Activated CD4-positive, alpha-beta memory T cell treated with anti-CD3 and anti-CD28 coated beads, Interleukin-2, amount 10 ng/mL, durations not matched to agents 7 days and 5 days (primary cell): ENCODE measurements at regions of chr17 and their contacts with region 1.

Region 1: GRCh38 chr17:64420143-64420971 is 28.6 kb upstream of the MILR1 start:
- DNase-seq: peak; percentile 34
- H3K4me3 Mint-ChIP-seq: no peak overlapping the region
- H3K27ac Mint-ChIP-seq: no peak overlapping the region
- H3K4me1 Mint-ChIP-seq: peaks cover 5% of the 10 kb centered on the region
- H3K27me3 Mint-ChIP-seq: peaks cover 5% of the 10 kb centered on the region

Region 2: DNA sequence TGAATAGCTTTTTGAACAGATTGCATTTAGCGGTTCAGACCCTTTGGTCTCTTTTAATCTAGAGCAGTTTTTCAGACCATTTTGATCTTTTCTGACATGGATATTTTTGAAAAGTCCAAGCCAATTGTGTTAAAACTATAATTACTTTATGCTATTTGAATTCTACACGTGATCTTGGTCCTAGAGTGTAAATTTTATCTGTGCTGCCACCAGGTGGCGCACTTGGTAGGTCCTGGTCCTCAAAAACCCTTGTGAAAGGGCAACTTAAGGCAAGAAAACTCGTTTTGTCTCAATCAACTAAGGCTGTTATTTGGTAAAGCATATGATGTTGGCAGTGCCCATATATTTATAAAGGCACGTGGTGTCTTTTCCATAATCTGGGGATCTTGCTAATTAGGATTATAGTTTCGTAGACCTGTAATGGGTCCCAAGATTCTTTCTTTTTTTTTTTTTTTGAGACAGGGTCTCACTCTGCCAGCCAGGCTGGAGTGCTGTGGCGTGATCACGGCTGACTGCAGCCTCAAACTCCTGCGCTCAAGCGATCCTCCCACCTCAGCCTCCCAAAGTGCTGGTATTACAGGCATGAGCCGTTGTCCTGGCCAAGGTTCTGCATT is 113.4 kb before region 1 on chr17:
- CTCF ChIA-PET with region 1: interaction called, 26 read pairs
- POLR2A ChIA-PET with region 1: interaction called, 3 read pairs
- DNase-seq: peak; percentile 71
- H3K4me3 Mint-ChIP-seq: no peak overlapping the region
- H3K27ac Mint-ChIP-seq: no peak overlapping the region
- H3K4me1 Mint-ChIP-seq: no peaks in the 10 kb centered on the region
- H3K27me3 Mint-ChIP-seq: peaks cover 2% of the 10 kb centered on the region

Region 3: DNA sequence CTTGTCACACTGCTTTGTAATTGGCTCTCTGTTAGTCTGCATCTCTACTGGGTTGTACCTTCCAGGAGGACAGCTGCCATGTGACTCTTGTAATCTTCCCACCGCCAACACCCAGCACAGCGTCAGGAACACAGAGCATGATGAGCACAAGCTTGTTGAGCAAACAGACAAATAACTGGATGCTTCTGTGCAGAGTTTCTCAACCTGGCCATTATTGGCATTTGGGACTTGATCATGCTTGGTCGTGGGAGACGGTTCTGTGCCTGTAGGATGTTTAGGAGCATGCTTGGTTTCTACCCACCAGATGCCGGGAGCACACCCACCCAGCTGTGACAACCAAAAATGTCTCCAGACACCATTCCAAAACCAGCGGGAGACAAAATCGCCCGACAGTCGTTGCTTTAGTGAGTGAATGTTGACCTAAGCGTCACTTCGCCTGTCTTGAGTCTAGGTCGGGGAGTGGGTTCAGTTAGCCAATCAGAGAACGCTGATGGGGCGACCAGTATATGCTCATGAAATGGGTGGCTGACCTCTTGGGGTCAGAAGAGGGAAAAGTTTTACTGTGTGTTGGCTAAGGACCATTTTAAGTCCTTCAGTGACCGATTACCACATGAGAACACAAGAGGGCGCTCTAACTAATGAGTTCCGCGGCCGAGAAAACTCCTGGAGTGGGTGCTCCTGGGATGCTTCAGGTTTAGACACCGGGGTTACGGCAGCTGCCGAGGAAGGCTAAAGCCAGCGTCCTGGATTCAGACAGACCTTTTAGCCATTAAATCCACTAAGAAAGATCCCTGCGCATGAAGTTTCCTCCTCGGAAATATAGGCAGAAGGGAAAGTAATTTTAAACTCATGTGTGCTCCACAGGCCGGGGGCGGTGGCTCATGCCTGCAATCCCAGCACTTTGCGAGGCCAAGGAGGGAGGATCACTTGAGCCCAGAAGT is 99.5 kb before region 1 on chr17:
- CTCF ChIA-PET with region 1: interaction called, 99 read pairs
- POLR2A ChIA-PET with region 1: no interaction called
- DNase-seq: peak; percentile 58
- H3K4me3 Mint-ChIP-seq: peak overlapping the region; percentile 33
- H3K27ac Mint-ChIP-seq: no peak overlapping the region
- H3K4me1 Mint-ChIP-seq: peaks cover 2% of the 10 kb centered on the region
- H3K27me3 Mint-ChIP-seq: peaks cover 14% of the 10 kb centered on the region

Region 4: DNA sequence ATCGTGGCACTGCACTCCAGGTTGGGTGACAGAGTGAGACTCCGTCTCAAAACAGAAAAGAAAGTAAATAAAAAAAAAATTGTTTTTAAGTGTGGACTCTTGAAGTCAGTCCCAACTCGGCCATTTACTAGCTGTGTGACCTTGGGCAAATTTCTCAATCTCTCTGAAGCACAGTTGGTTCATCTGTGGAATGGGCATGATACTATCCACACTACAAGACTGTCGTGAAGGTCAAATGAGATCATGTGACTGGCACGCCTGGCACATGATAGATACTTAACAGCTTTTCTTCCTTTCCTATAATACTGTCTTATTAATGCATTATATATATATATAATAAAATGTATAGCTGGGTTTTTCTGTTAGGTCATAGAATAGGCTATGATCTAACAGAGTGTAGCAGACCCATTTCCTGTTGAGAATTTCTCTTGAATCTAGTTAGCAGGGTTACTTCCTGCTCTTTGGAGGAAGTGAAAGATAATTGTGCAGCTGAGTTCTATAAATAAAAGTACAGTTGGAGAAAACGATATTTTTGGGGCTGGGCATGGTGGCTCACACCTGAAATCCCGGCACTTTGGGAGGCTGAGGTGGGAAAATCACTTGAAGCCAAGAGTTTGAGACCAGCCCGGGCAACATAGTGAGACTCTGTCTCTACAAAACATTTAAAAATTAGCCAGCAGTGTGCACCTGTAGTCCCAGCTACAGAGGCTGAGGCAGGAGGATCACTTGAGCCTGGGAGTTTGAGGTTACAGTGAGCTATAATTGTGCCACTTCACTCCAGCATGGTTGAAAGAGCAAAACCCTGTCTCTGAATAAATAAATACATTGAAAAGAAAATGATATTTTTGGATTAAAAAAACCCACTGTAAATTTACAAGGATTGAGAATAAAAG is 35.9 kb after region 1 on chr17:
- CTCF ChIA-PET with region 1: interaction called, 17 read pairs
- POLR2A ChIA-PET with region 1: interaction called, 4 read pairs
- DNase-seq: no peak
- H3K4me3 Mint-ChIP-seq: no peak overlapping the region
- H3K27ac Mint-ChIP-seq: peak overlapping the region; percentile 76
- H3K4me1 Mint-ChIP-seq: peaks cover 24% of the 10 kb centered on the region
- H3K27me3 Mint-ChIP-seq: no peaks in the 10 kb centered on the region

Region 5: DNA sequence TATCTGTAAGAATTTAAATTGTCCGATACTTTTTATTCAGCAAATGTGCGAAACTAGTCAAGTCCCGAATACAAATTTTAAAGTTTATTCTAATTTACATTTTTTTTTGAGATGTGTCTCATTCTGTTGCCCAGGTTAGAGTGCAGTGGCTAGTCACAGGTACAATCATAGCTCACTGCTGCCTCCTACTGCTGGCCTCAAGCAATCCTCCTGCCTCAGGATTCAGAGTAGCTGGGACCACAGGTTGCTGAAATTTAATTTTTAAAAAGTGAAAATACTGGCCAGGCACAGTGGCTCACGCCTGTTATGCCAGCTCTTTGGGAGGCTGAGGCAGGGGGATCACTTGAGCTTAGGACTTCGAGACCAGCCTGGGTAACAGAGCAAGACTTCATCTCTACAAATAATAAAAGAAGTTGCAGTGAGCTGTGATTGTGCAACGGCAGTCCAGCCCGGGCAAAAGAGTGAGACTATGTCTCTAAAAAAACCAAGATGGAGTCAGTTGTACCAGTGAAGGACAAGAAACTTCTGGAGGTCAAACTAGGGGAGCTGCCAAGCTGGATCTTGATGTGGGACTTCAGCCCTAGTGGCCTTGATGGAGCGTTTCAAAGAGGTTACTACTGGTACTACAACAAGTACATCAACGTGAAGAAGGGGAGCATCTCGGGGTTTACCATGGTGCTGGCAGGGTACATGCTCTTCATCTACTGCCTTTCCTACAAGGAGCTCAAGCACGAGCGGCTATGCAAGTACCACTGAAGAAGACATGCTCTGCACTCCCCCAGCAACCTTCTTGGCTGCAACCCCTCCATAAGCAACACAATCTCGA is 70.9 kb after region 1 on chr17:
- CTCF ChIA-PET with region 1: interaction called, 341 read pairs
- POLR2A ChIA-PET with region 1: interaction called, 38 read pairs
- DNase-seq: peak; percentile 73
- H3K4me3 Mint-ChIP-seq: no peak overlapping the region
- H3K27ac Mint-ChIP-seq: no peak overlapping the region
- H3K4me1 Mint-ChIP-seq: peaks cover 42% of the 10 kb centered on the region
- H3K27me3 Mint-ChIP-seq: no peaks in the 10 kb centered on the region

Region 6: GRCh38 chr17:64506576-64507477 is 86.5 kb after region 1 on chr17 and contains the start of gene CEP95:
- CTCF ChIA-PET with region 1: interaction called, 31 read pairs
- POLR2A ChIA-PET with region 1: interaction called, 50 read pairs
- DNase-seq: peak; percentile 95
- H3K4me3 Mint-ChIP-seq: peak within 1 kb of the TSS; percentile 99
- H3K27ac Mint-ChIP-seq: peak within 1 kb of the TSS; percentile 100
- H3K4me1 Mint-ChIP-seq: peaks cover 56% of the 10 kb centered on the region
- H3K27me3 Mint-ChIP-seq: no peaks in the 10 kb centered on the region
- total RNA-seq, gene CEP95: 47.7 to 48.5 TPM